K562 (cell line): ENCODE measurements at regions of chr11 and their contacts with region 1.

Region 1: GRCh38 chr11:95577716-95578460 is 211.7 kb downstream of the FAM76B start:
- DNase-seq: no peak
- ATAC-seq: no peak
- H3K4me3 ChIP-seq: no peak overlapping the region
- H3K27ac ChIP-seq: no peak overlapping the region
- H3K4me1 ChIP-seq: peaks cover 0 to 4% of the 10 kb centered on the region in 2 experiments; a peak in 1 of 5 replicates
- H3K27me3 ChIP-seq: no peaks in the 10 kb centered on the region
- CTCF ChIP-seq: no peak
- EP300 ChIP-seq: no peak
- POLR2A ChIP-seq: no peak
- RAD21 ChIP-seq: no peak

Region 2: GRCh38 chr11:94988748-94989147 is 589.1 kb before region 1 on chr11:
- CTCF ChIA-PET with region 1: no interaction called
- POLR2A ChIA-PET with region 1: no interaction called
- in situ Hi-C with region 1: no loop called
- intact Hi-C with region 1: no loop called
- DNase-seq: no peak
- ATAC-seq: no peak
- H3K4me3 ChIP-seq: no peak overlapping the region
- H3K27ac ChIP-seq: no peak overlapping the region
- H3K4me1 ChIP-seq: no peaks in the 10 kb centered on the region
- H3K27me3 ChIP-seq: 0 out of 5 replicates have a peak, but pooled peaks cover 0 to 2% of the 10 kb centered on the region in 2 experiments
- CTCF ChIP-seq: no peak
- EP300 ChIP-seq: no peak
- POLR2A ChIP-seq: no peak
- RAD21 ChIP-seq: no peak

Region 3: DNA sequence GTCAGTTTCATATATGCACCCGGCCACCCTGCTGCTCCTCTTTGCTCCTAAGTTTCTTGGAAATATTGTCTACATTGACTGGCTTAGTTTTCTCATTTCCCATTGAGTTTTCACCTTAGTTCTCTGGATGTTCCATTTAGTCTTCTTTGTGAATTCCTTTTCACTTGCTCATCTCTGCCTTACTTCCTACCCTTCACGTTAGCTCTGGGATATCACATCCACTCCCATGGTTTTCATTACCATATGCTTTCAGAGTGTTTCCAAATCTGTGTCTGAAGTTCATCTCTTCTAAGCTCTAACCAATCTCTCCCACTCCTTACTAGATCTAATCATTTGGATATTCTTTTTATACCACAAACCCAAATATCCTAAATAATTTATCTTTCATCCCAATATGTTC is 14.7 kb before region 1 on chr11:
- CTCF ChIA-PET with region 1: no interaction called
- POLR2A ChIA-PET with region 1: interaction called, 10 read pairs
- in situ Hi-C with region 1: no loop called
- intact Hi-C with region 1: no loop called
- DNase-seq: no peak
- ATAC-seq: no peak
- H3K4me3 ChIP-seq: no peak overlapping the region
- H3K27ac ChIP-seq: no peak overlapping the region
- H3K4me1 ChIP-seq: peaks cover 0 to 3% of the 10 kb centered on the region in 2 experiments; a peak in 2 of 5 replicates
- H3K27me3 ChIP-seq: no peaks in the 10 kb centered on the region; a peak in 1 of 5 replicates
- CTCF ChIP-seq: no peak
- EP300 ChIP-seq: no peak
- POLR2A ChIP-seq: no peak
- RAD21 ChIP-seq: no peak